Endothelial cell of umbilical vein (primary cell): ENCODE measurements at regions of chr7 and their contacts with region 1.

Region 1: GRCh38 chr7:79282063-79282694 is 171.3 kb downstream of the MAGI2 start:
- DNase-seq: peak; percentile 68
- H3K4me3 ChIP-seq: no peak overlapping the region
- H3K27ac ChIP-seq: peak overlapping the region; percentile 90
- H3K4me1 ChIP-seq: peaks cover 22% of the 10 kb centered on the region
- H3K27me3 ChIP-seq: no peaks in the 10 kb centered on the region
- CTCF ChIP-seq: peak; percentile 26
- POLR2A ChIP-seq: no peak

Region 2: GRCh38 chr7:78510580-78511188 is 771.5 kb before region 1 on chr7:
- CTCF ChIA-PET with region 1: interaction called, 10 read pairs
- POLR2A ChIA-PET with region 1: no interaction called
- dilution Hi-C with region 1: no loop called
- intact Hi-C with region 1: loop called (anchors 2 kb)
- DNase-seq: peak; percentile 49
- H3K4me3 ChIP-seq: no peak overlapping the region
- H3K27ac ChIP-seq: no peak overlapping the region
- H3K4me1 ChIP-seq: no peaks in the 10 kb centered on the region
- H3K27me3 ChIP-seq: no peaks in the 10 kb centered on the region
- CTCF ChIP-seq: peak; percentile 63 to 69
- POLR2A ChIP-seq: no peak

Region 3: GRCh38 chr7:79245623-79246249 is 36.4 kb before region 1 on chr7:
- CTCF ChIA-PET with region 1: no interaction called
- POLR2A ChIA-PET with region 1: no interaction called
- dilution Hi-C with region 1: no loop called
- intact Hi-C with region 1: no loop called
- DNase-seq: no peak
- H3K4me3 ChIP-seq: no peak overlapping the region
- H3K27ac ChIP-seq: no peak overlapping the region
- H3K4me1 ChIP-seq: no peaks in the 10 kb centered on the region
- H3K27me3 ChIP-seq: no peaks in the 10 kb centered on the region
- CTCF ChIP-seq: no peak
- POLR2A ChIP-seq: no peak

Region 4: GRCh38 chr7:79272066-79272669 is 10.0 kb before region 1 on chr7:
- CTCF ChIA-PET with region 1: interaction called, 56 read pairs
- POLR2A ChIA-PET with region 1: no interaction called
- dilution Hi-C with region 1: no loop called
- intact Hi-C with region 1: loop called (anchors 1 kb)
- DNase-seq: peak; percentile 55
- H3K4me3 ChIP-seq: no peak overlapping the region
- H3K27ac ChIP-seq: no peak overlapping the region
- H3K4me1 ChIP-seq: peaks cover 7% of the 10 kb centered on the region
- H3K27me3 ChIP-seq: no peaks in the 10 kb centered on the region
- CTCF ChIP-seq: peak; percentile 41 to 45
- POLR2A ChIP-seq: no peak

Region 5: GRCh38 chr7:79452032-79452494 is 169.9 kb after region 1 on chr7:
- CTCF ChIA-PET with region 1: interaction called, 5 read pairs
- POLR2A ChIA-PET with region 1: no interaction called
- dilution Hi-C with region 1: no loop called
- intact Hi-C with region 1: loop called (anchors 1 kb)
- DNase-seq: peak; percentile 88
- H3K4me3 ChIP-seq: peak overlapping the region; percentile 78 to 84 (median 82)
- H3K27ac ChIP-seq: peak overlapping the region; percentile 78
- H3K4me1 ChIP-seq: peaks cover 19% of the 10 kb centered on the region
- H3K27me3 ChIP-seq: no peaks in the 10 kb centered on the region
- CTCF ChIP-seq: no peak
- POLR2A ChIP-seq: peak; percentile 74

Region 6: GRCh38 chr7:80047856-80048459 is 765.8 kb after region 1 on chr7:
- CTCF ChIA-PET with region 1: interaction called, 14 read pairs
- POLR2A ChIA-PET with region 1: no interaction called
- dilution Hi-C with region 1: no loop called
- intact Hi-C with region 1: no loop called
- DNase-seq: no peak
- H3K4me3 ChIP-seq: no peak overlapping the region
- H3K27ac ChIP-seq: no peak overlapping the region
- H3K4me1 ChIP-seq: no peaks in the 10 kb centered on the region
- H3K27me3 ChIP-seq: no peaks in the 10 kb centered on the region
- CTCF ChIP-seq: no peak
- POLR2A ChIP-seq: no peak